CD4-positive, alpha-beta T cell (primary cell): ENCODE measurements at regions of chr3 and their contacts with region 1.

Region 1: DNA sequence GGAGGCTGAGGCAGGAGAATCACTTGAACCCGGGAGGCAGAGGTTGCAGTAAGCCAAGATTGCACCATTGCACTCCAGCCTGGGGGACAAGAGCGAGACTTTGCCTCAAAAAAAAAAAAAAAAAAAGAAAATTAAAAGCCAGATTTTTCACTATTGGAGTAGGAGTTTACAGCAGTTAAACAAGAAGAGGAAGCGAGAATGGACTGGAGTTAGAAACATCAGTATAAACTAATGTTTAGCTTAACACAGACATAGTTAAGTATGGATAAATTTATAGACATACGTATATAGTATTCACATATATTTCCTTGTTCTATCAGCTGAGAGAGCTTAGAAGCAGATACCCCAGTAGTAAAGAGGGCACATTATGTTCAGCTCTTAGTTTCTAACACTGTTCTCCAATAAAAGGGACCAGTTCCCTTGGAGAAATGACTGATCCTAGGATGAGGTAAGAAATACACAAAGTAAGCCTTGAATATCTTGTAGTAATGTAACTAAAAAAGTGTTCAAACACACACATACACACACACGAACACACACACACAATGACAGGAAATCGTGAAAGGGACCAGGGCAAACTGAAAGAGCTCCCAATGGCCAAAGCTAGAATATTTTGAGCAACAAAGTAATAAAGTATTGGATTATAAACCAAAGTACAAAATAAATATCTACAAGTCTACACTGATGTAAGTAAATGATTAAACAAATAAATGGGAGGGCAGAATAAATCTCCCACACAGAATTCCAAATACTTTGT is 25.1 kb downstream of the PIK3CB start:
- DNase-seq: no peak
- ATAC-seq: no peak
- H3K4me3 ChIP-seq: no peak overlapping the region
- H3K4me3 Mint-ChIP-seq: no peak overlapping the region
- H3K27ac ChIP-seq: no peak overlapping the region
- H3K27ac Mint-ChIP-seq: no peak overlapping the region
- H3K4me1 ChIP-seq: peaks cover 9% of the 10 kb centered on the region
- H3K4me1 Mint-ChIP-seq: peaks cover 31% of the 10 kb centered on the region
- H3K27me3 ChIP-seq: no peaks in the 10 kb centered on the region
- H3K27me3 Mint-ChIP-seq: no peaks in the 10 kb centered on the region
- CTCF ChIP-seq: no peak

Region 2: DNA sequence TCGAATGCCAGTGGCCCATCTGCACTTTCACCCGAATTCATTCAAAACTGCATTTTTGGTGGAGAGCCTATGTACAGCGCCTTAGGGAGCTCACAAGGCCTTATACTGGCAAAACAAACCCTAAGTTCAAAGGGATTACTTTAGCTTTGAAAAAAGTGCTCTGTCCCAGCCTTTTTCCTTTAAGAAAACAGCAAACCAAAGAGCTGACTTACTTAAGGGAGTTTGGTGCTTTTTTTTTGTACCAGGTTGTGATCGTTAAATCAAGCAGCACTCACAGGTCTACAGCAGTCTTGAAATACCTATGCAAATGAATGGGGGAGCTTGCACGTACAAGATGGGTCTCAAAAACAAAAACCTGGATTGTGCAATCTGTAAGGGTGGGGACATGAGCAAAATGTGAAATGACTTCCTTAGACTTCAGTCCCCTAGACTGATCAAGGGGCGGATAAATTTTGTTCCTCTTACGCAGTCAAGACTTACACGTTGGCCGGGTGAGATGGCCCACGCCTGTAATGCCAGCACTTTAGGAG is 36.6 kb after region 1 on chr3:
- CTCF ChIA-PET with region 1: no interaction called
- POLR2A ChIA-PET with region 1: no interaction called
- intact Hi-C with region 1: loop called in 1 of 2 experiments (anchors 5 kb)
- DNase-seq: no peak
- ATAC-seq: no peak
- H3K4me3 ChIP-seq: no peak overlapping the region
- H3K4me3 Mint-ChIP-seq: no peak overlapping the region
- H3K27ac ChIP-seq: no peak overlapping the region
- H3K27ac Mint-ChIP-seq: no peak overlapping the region
- H3K4me1 ChIP-seq: no peaks in the 10 kb centered on the region
- H3K4me1 Mint-ChIP-seq: no peaks in the 10 kb centered on the region
- H3K27me3 ChIP-seq: no peaks in the 10 kb centered on the region
- H3K27me3 Mint-ChIP-seq: no peaks in the 10 kb centered on the region
- CTCF ChIP-seq: no peak